Activated CD4-positive, alpha-beta T cell treated with anti-CD3 and anti-CD28 coated beads for 36 hours (primary cell): ENCODE measurements at regions of chr1 and their contacts with region 1.

Region 1: GRCh38 chr1:75134647-75135572 is 722 bp downstream of the LHX8 start:
- DNase-seq: peak; percentile 34
- ATAC-seq: peak; percentile 53
- H3K4me3 Mint-ChIP-seq: peak overlapping the region; percentile 42
- H3K27ac Mint-ChIP-seq: no peak overlapping the region
- H3K4me1 Mint-ChIP-seq: peaks cover 12% of the 10 kb centered on the region
- H3K27me3 Mint-ChIP-seq: peaks cover 77% of the 10 kb centered on the region

Region 2: DNA sequence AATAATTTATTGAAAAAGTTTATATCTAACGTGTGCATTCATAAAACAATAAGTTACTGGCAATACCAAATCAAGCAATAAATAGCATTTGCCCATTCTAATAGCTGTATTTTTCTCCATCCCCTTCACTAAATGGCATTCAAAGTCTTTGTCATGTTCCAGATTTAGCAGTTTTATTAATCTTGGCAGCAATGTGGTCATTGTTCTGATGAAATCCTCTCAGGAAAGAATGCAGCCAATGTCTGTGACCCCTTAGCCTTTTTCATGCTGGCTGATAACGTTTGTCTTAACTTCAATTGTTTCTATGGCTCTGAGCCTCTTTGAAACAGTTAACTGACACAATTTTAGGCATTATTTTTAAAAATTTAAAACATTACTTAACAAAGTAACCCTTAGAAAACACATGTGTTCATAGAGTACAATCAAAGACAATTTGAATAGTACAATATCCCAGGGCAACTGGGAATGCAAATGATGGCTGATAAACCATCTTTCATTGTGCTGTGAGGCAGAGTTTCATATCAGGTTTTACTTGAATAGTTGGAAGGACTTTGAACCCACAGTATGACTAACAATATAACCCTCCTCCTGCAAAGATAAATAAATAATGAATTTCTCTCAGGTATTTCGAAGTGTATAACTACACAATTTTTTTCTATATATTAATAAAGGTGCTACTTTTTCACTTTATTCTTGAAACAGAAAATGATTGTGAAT is 1154.4 kb before region 1 on chr1:
- CTCF ChIA-PET with region 1: no interaction called
- POLR2A ChIA-PET with region 1: no interaction called
- intact Hi-C with region 1: no loop called
- DNase-seq: no peak
- ATAC-seq: no peak
- H3K4me3 Mint-ChIP-seq: no peak overlapping the region
- H3K27ac Mint-ChIP-seq: no peak overlapping the region
- H3K4me1 Mint-ChIP-seq: no peaks in the 10 kb centered on the region
- H3K27me3 Mint-ChIP-seq: peaks cover 2% of the 10 kb centered on the region

Region 3: DNA sequence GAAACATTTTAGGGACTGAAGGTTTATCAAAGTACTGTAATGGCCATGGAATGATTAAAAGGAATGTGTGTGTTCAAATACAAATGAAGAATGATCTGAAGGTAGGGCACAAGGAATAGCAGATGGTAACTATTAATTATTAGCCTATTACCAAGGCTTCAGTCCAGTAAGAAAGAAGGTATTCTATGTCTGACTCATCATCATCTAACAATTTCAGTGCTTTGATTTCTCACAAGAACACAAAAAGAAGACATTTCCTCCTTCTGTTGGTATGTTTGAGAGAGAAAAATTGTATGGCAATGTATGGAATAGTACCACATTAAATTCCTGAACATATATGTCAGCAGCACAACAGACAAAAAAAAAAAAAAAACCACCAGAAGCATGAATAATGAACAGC is 344.5 kb before region 1 on chr1:
- CTCF ChIA-PET with region 1: no interaction called
- POLR2A ChIA-PET with region 1: no interaction called
- intact Hi-C with region 1: no loop called
- DNase-seq: no peak
- ATAC-seq: no peak
- H3K4me3 Mint-ChIP-seq: no peak overlapping the region
- H3K27ac Mint-ChIP-seq: no peak overlapping the region
- H3K4me1 Mint-ChIP-seq: no peaks in the 10 kb centered on the region
- H3K27me3 Mint-ChIP-seq: peaks cover 17% of the 10 kb centered on the region

Region 4: DNA sequence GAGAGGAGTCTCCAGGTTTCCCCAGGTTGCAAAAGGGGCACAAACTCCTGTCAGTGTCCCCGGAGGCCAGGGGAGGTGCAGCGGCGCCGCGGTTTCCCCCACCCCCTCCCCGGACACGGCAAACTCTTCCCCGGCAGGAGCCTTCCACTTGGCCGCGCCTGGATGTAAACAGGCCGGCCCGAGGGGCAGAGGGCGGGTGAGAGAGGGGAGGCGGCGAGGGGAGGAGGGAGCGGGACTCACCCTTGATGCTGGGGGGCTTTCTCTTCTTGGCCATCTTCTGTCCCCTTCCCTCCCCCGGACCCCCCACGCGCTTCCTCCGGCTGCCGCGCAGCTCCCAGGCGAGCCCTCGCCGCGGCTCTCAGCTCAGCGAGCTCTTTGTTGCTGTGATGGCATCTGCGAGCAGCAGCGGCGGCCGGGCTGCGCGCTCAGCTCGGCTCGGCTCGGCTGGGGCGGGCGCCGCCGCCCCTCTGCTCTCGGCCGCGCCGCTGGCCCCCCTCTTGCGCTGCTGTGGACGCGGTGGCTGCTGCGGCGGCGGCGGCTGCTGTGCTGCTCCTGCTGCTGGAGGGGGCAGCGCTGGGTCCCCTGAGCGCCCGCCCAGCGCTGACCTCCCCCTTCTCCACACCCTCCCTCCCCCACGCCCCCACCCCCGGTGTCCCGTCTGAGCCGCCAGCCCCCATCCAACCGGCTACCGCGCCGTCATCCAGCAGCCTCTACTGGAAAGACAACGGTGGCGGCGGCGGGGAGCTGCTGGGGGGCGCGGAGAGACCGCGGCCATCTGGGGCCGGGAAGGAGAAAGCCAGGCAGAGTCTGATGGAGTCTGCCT is 480.9 kb after region 1 on chr1:
- CTCF ChIA-PET with region 1: no interaction called
- POLR2A ChIA-PET with region 1: no interaction called
- intact Hi-C with region 1: loop called in 1 of 2 experiments (anchors 10 kb)
- DNase-seq: peak; percentile 38
- ATAC-seq: peak; percentile 57
- H3K4me3 Mint-ChIP-seq: peak overlapping the region; percentile 49
- H3K27ac Mint-ChIP-seq: no peak overlapping the region
- H3K4me1 Mint-ChIP-seq: peaks cover 16% of the 10 kb centered on the region
- H3K27me3 Mint-ChIP-seq: peaks cover 64% of the 10 kb centered on the region